Adrenal gland (tissue), 19 donors: ENCODE measurements at regions of chr5 and their contacts with region 1.

Region 1: GRCh38 chr5:176660860-176661641 is 13.8 kb downstream of the TSPAN17 start:
- DNase-seq: peak; percentile 67 to 85 (median 73)
- H3K4me3 ChIP-seq: no peak overlapping the region
- H3K27ac ChIP-seq: no peak overlapping the region
- H3K4me1 ChIP-seq: peaks cover 0 to 5% of the 10 kb centered on the region in 2 donors
- H3K27me3 ChIP-seq: peaks cover 3% of the 10 kb centered on the region
- CTCF ChIP-seq: peak; percentile 80 to 99 (median 91)
- POLR2A ChIP-seq: no peak

Region 2: DNA sequence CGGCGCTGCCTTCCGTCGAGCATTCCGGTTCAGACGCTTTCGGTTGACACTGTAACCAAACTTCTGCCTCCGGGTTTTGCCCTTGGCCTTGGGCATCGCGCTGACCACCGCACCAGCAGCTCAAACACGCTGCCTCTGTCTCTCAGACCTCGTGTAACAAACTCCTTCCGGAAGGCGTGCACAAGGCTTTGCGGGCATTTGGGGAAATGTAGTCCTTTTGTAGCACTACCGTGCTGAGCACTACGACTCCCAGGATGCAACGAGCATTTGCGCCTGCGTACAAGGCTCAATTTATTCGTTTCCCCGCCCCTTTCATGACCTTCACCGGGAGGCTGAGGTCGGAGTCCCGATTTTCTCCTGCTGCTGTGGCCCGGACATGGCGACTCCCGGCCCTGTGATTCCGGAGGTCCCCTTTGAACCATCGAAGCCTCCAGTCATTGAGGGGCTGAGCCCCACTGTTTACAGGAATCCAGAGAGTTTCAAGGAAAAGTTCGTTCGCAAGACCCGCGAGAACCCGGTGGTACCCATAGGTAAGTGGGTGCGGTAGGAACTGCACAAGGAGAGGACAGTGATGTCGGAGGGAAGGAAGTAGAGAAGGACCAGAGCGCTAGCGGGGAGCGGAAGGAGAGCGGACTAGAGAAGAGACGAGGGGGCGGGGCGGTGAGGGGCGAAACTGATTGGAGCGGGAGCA is 272.5 kb before region 1 on chr5 and contains the starts of genes HIGD2A and NOP16:
- intact Hi-C with region 1: no loop called
- DNase-seq: peak; percentile 99 to 100 (median 100)
- H3K4me3 ChIP-seq: peak within 1 kb of the TSS; percentile 17 to 89 (median 80)
- H3K27ac ChIP-seq: peak within 1 kb of the TSS; percentile 92 to 99 (median 96)
- H3K4me1 ChIP-seq: peaks cover 12 to 24% of the 10 kb centered on the region in 2 donors
- H3K27me3 ChIP-seq: no peaks in the 10 kb centered on the region
- CTCF ChIP-seq: peak in 3 of 6 experiments; percentile 28 to 51 (median 44)
- POLR2A ChIP-seq: peak in 1 of 2 donors; percentile 7
- total RNA-seq, gene HIGD2A: 138 to 262 (median 198) TPM
- total RNA-seq, gene NOP16: 6.2 to 53.3 (median 19.3) TPM

Region 3: GRCh38 chr5:176948458-176948857 is 287.4 kb after region 1 on chr5:
- intact Hi-C with region 1: loop called (anchors 10 kb)
- DNase-seq: no peak
- H3K4me3 ChIP-seq: no peak overlapping the region
- H3K27ac ChIP-seq: no peak overlapping the region
- H3K4me1 ChIP-seq: peaks cover 10 to 20% of the 10 kb centered on the region in 2 donors
- H3K27me3 ChIP-seq: no peaks in the 10 kb centered on the region
- CTCF ChIP-seq: no peak
- POLR2A ChIP-seq: no peak

Region 4: DNA sequence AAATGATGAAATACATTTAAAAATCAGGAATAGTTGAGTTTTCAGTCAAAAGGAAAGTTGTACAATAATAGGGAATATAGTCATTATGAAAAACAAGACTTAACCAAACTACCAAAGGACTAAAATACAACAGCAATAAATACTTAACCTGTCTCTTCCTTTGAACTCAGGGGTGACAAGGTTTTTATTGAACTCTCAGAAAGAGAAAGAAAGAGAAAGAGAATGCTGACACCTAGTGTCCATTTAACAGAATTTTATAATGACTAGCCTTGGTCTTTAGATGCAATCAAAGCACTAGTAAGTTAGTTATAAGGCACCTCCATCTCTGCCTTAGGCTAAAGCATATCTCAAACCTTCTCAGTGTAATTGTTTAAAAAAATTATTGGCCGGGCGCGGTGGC is 298.0 kb after region 1 on chr5:
- intact Hi-C with region 1: loop called in 1 of 2 experiments (anchors 10 kb)
- DNase-seq: no peak
- H3K4me3 ChIP-seq: no peak overlapping the region
- H3K27ac ChIP-seq: no peak overlapping the region
- H3K4me1 ChIP-seq: peaks cover 0 to 22% of the 10 kb centered on the region in 2 donors
- H3K27me3 ChIP-seq: no peaks in the 10 kb centered on the region
- CTCF ChIP-seq: peak; percentile 27 to 62 (median 48)
- POLR2A ChIP-seq: no peak

Region 5: DNA sequence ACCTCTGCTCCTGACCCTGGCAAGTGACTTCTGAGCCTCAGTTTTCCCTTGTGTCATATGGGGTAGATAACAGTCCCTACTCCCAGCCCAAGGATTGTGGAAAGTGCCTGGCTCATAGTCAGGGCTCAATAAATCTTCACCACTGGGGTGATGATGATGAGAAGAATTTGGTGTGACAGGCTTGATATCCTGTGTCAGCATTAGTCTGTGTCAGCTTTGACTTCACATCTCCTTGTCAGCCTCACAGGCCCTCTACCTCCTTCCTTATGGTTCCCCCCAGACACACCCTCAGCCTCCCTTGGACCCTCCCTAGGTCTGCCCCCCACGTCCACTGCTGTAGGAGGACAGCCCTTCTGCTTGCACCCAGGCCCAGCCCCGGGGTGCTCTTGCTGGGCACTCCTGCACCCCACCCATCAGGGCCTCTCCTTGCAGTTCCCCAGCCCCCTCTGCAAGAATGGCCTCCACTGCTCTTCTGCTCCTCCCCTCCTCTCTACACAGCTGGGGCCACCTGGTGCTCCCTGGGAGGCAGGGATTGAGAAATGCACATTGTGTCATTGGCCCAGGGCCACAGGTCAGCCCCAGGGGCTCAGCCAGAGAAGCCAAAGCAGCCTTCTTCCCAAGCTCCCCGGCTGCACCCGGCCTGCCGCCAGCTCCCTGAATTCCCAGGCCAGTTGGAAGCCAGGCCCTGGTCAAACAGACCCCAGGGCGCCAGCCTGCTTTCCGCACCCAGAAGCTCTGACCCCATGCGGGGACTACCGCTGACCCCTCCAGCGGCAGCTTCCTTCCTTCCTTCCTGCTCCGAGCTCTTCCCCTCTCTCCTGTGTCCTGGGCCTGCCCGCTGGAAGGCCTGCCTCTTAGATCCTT is 433.4 kb after region 1 on chr5:
- intact Hi-C with region 1: loop called in 1 of 2 experiments (anchors 10 kb)
- DNase-seq: peak; percentile 63 to 89 (median 86)
- H3K4me3 ChIP-seq: no peak overlapping the region
- H3K27ac ChIP-seq: peak overlapping the region in 3 of 5 donors; percentile 46 to 88 (median 59)
- H3K4me1 ChIP-seq: peaks cover 24 to 37% of the 10 kb centered on the region in 2 donors
- H3K27me3 ChIP-seq: no peaks in the 10 kb centered on the region
- CTCF ChIP-seq: no peak
- POLR2A ChIP-seq: no peak

Region 6: GRCh38 chr5:177113566-177114424 is 452.7 kb after region 1 on chr5:
- intact Hi-C with region 1: loop called in 1 of 2 experiments (anchors 5 kb)
- DNase-seq: peak; percentile 67 to 94 (median 80)
- H3K4me3 ChIP-seq: peak overlapping the region in 1 of 4 donors; percentile 31
- H3K27ac ChIP-seq: peak overlapping the region in 3 of 5 donors; percentile 24 to 86 (median 28)
- H3K4me1 ChIP-seq: peaks cover 0 to 21% of the 10 kb centered on the region in 2 donors
- H3K27me3 ChIP-seq: no peaks in the 10 kb centered on the region
- CTCF ChIP-seq: peak; percentile 96 to 99 (median 98)
- POLR2A ChIP-seq: no peak